A673 (cell line): ENCODE measurements at regions of chr17 and their contacts with region 1.

Region 1: DNA sequence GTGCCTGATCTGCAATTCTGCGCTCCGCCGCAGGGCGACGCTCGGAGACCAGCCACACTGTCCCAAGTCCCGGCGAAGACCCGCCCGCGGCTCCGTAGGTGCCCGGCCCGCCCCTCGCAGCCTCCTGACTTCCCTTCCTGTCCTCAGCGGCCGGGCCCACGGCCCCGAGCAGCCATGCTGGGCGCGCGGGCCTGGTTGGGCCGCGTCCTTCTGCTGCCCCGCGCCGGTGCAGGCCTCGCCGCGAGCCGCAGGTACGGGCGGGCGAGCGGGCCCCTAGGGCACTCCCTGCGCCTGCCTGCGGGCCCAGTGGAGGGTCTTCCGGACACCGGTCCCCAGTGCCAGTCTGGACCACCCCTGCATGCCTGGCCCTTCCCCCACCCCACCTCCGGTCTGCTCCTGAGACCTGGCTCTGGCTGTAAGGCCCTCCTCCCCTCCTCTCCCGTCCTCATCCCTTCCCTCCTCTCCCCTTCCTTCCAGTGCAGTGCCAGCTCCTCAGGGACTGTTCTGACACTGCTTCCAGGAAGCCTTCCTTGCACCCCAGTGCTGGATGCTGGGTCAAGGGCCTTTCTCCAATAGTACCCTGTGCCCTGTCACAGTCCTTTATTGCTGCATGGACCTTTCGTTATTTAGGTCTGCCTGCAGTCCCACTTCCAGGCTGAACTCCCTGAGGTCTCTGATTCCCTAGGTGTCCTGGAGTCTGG is at the start of gene SPATA20:
- DNase-seq: peak; percentile 93
- H3K4me3 ChIP-seq: peak within 1 kb of the TSS; percentile 58
- H3K27ac ChIP-seq: peak within 1 kb of the TSS; percentile 68
- H3K4me1 ChIP-seq: peaks cover 14% of the 10 kb centered on the region
- H3K27me3 ChIP-seq: no peaks in the 10 kb centered on the region
- CTCF ChIP-seq: peak; percentile 98
- total RNA-seq, gene SPATA20: 11.1 and 16.5 TPM in 2 replicates

Region 2: GRCh38 chr17:50238601-50239280 is 308.4 kb before region 1 on chr17:
- CTCF ChIA-PET with region 1: no interaction called
- POLR2A ChIA-PET with region 1: no interaction called
- intact Hi-C with region 1: no loop called
- DNase-seq: no peak
- H3K4me3 ChIP-seq: no peak overlapping the region
- H3K27ac ChIP-seq: no peak overlapping the region
- H3K4me1 ChIP-seq: no peaks in the 10 kb centered on the region
- H3K27me3 ChIP-seq: peaks cover 33% of the 10 kb centered on the region
- CTCF ChIP-seq: no peak

Region 3: DNA sequence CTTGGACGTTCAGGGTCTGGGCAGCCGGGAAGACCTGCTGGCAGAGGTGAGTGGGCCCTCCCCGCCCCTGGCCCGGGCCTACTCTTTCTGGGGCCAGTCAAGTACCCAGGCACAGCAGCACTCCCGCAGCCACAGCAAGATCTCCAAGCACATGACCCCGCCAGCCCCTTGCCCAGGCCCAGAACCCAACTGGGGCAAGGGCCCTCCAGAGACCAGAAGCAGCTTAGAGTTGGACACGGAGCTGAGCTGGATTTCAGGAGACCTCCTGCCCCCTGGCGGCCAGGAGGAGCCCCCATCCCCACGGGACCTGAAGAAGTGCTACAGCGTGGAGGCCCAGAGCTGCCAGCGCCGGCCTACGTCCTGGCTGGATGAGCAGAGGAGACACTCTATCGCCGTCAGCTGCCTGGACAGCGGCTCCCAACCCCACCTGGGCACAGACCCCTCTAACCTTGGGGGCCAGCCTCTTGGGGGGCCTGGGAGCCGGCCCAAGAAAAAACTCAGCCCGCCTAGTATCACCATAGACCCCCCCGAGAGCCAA is 78.9 kb after region 1 on chr17:
- CTCF ChIA-PET with region 1: interaction called, 20 read pairs
- POLR2A ChIA-PET with region 1: no interaction called
- intact Hi-C with region 1: loop called (anchors 1 kb)
- DNase-seq: peak; percentile 81
- H3K4me3 ChIP-seq: no peak overlapping the region
- H3K27ac ChIP-seq: no peak overlapping the region
- H3K4me1 ChIP-seq: peaks cover 22% of the 10 kb centered on the region
- H3K27me3 ChIP-seq: no peaks in the 10 kb centered on the region
- CTCF ChIP-seq: peak; percentile 76

Region 4: GRCh38 chr17:50681263-50682210 is 134.4 kb after region 1 on chr17:
- CTCF ChIA-PET with region 1: interaction called, 5 read pairs
- POLR2A ChIA-PET with region 1: no interaction called
- intact Hi-C with region 1: loop called (anchors 1 kb)
- DNase-seq: peak; percentile 88
- H3K4me3 ChIP-seq: no peak overlapping the region
- H3K27ac ChIP-seq: no peak overlapping the region
- H3K4me1 ChIP-seq: peaks cover 8% of the 10 kb centered on the region
- H3K27me3 ChIP-seq: no peaks in the 10 kb centered on the region
- CTCF ChIP-seq: peak; percentile 81

Region 5: DNA sequence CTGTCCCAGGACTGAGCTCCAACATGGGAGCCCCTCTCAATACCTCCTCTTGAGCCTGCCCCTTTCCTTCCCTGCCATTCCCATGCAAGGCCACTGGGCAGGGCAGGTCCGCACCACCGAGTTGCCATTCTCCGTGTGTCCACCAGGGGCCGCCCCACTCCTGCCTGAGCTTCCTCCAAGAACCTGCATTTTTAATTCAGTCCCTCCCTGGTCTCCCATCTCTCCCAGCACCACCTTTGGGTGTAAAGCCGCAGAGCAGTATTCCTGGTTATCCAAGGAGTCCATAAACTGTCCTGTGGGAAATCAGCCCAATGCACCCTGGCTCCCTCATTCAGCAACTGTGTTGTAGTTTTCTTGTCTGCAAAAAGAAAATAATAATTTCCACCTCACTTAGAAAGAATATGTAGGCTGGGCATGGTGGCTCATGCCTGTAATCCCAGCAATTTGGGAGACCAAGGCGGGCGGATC is 236.0 kb after region 1 on chr17:
- CTCF ChIA-PET with region 1: no interaction called
- POLR2A ChIA-PET with region 1: no interaction called
- intact Hi-C with region 1: loop called (anchors 10 kb)
- DNase-seq: peak; percentile 90
- H3K4me3 ChIP-seq: no peak overlapping the region
- H3K27ac ChIP-seq: no peak overlapping the region
- H3K4me1 ChIP-seq: no peaks in the 10 kb centered on the region
- H3K27me3 ChIP-seq: no peaks in the 10 kb centered on the region
- CTCF ChIP-seq: peak; percentile 99

Region 6: DNA sequence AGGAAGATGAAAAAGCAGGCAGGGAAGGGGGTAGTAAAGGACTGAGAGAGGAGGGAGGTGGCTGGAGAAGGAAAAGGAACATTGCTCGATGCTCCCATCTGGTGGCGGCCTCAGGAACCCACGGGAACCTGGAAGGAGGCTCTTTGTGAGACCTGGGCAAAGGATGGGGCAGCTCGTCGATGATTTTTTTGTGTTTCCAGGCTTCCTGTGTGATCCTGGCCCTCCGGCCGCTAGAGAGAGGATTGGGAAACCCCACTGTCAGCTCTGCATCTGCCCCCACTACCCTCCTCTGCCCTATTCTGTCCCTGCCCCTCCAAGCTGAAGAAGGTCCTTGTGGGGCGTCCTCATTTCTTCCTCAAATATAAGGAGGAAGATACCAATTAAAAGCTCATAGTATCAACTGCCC is 294.8 kb after region 1 on chr17:
- CTCF ChIA-PET with region 1: no interaction called
- POLR2A ChIA-PET with region 1: no interaction called
- intact Hi-C with region 1: loop called (anchors 2 kb)
- DNase-seq: peak; percentile 81
- H3K4me3 ChIP-seq: no peak overlapping the region
- H3K27ac ChIP-seq: no peak overlapping the region
- H3K4me1 ChIP-seq: no peaks in the 10 kb centered on the region
- H3K27me3 ChIP-seq: no peaks in the 10 kb centered on the region
- CTCF ChIP-seq: peak; percentile 86